ENCODE measurements at regions of chr15 and their contacts with region 1.

Region 1: DNA sequence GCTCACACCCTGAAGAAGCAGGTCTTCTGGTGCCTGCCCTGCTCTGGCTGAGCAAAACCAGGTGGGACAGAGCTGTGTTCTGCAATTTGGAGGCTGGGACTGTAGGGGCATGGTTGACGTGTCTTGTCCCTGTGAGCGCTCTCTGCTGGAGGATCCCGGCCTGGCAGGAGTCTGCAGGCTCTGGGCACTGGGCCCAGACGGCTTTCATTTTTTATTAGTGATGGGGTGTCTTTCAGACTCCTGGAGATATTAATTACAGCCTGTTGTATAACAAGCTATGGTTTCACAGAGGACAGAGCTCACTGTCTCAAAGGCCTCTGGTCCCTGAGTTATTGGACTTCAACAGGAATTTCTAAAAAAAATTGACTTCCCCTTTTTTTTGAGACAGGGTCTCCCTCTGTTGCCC is 29.5 kb upstream of the ZNF710 start:
- DNase-seq: peak; percentile 29
- H3K4me3 ChIP-seq: no peak overlapping the region
- H3K27ac ChIP-seq: no peak overlapping the region
- H3K4me1 ChIP-seq: no peaks in the 10 kb centered on the region
- H3K27me3 ChIP-seq: peaks cover 0 to 4% of the 10 kb centered on the region in 2 experiments
- CTCF ChIP-seq: peak; percentile 40 to 64
- POLR2A ChIP-seq: no peak

Region 2: GRCh38 chr15:89750560-89751542 is 220.7 kb before region 1 on chr15 and contains the start of gene MESP1:
- CTCF ChIA-PET with region 1: no interaction called
- POLR2A ChIA-PET with region 1: no interaction called
- dilution Hi-C with region 1: no loop called
- intact Hi-C with region 1: loop called (anchors 5 kb)
- DNase-seq: peak; percentile 91
- H3K4me3 ChIP-seq: peak within 1 kb of the TSS; percentile 38 to 48 (median 46)
- H3K27ac ChIP-seq: no peak within 1 kb of the TSS
- H3K4me1 ChIP-seq: peaks cover 6% of the 10 kb centered on the region
- H3K27me3 ChIP-seq: peaks cover 3 to 12% of the 10 kb centered on the region in 2 experiments
- CTCF ChIP-seq: peak; percentile 66 to 90
- POLR2A ChIP-seq: peak; percentile 42
- total RNA-seq, gene MESP1: 1.0 and 1.7 TPM in 2 replicates

Region 3: DNA sequence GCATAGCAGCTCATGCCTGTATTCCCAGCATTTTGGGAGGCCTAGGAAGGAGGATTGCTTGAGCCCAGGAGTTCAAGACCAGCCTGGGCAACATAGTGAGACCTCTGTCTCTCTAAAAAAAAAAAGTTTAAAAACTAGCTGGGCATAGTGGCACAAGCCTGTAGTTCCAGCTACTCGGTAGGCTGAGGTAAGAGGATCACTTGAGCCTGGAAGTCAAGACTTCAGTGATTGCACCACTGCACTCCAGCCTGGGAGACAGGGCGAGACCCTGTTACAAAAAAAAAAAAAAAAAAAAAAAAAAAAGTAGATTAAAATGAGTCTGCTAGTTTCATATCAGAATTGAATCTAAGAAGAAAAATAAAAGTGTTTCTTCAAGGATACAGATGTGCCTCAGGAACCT is 124.5 kb before region 1 on chr15:
- CTCF ChIA-PET with region 1: no interaction called
- POLR2A ChIA-PET with region 1: no interaction called
- dilution Hi-C with region 1: no loop called
- intact Hi-C with region 1: no loop called
- DNase-seq: no peak
- H3K4me3 ChIP-seq: no peak overlapping the region
- H3K27ac ChIP-seq: peak overlapping the region; percentile 87
- H3K4me1 ChIP-seq: peaks cover 52% of the 10 kb centered on the region
- H3K27me3 ChIP-seq: no peaks in the 10 kb centered on the region
- CTCF ChIP-seq: no peak
- POLR2A ChIP-seq: no peak

Region 4: GRCh38 chr15:89857673-89858072 is 113.9 kb before region 1 on chr15:
- CTCF ChIA-PET with region 1: no interaction called
- POLR2A ChIA-PET with region 1: no interaction called
- dilution Hi-C with region 1: no loop called
- intact Hi-C with region 1: no loop called
- DNase-seq: no peak
- H3K4me3 ChIP-seq: no peak overlapping the region
- H3K27ac ChIP-seq: no peak overlapping the region
- H3K4me1 ChIP-seq: no peaks in the 10 kb centered on the region
- H3K27me3 ChIP-seq: no peaks in the 10 kb centered on the region
- CTCF ChIP-seq: no peak
- POLR2A ChIP-seq: no peak

Region 5: DNA sequence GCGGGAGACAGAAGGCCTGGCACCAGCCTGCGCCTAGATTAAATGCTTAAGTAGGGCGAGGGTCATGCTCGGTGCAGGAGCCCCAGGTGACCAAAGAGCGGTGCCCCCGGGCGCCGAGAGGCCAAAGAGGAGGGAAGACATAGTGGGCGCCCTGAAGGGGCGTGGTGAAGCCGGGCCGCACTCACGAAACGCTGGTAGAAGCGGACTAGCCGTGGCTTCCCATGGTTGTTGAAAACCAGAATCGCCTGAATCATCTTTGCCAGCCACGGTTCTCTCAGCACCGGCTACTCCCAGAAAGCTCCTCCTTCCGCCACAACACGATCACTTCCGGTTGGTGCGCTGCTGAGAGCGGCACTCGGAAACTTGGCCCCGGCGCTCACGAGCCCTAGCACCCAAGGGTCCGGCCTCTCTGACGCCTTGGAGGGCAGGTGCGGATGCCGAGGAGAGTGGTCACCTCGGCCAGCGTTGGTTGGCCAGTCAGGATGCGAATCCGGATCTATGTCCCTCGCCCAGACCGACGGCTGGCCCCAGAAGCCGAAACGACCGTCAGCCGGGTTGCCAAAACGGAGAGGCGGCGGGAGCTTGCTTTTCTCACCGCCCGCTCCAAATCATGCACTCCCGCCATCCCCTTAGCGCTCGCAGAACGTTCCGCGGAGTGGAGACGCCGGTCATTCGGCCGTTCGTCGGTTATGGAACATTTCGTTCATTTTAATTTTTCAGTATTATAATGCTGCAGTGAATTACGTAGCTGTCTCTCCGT is 77.7 kb before region 1 on chr15 and contains the start of gene AP3S2:
- CTCF ChIA-PET with region 1: interaction called, 3 read pairs
- POLR2A ChIA-PET with region 1: no interaction called
- dilution Hi-C with region 1: no loop called
- intact Hi-C with region 1: loop called (anchors 1 kb)
- DNase-seq: peak; percentile 92
- H3K4me3 ChIP-seq: peak within 1 kb of the TSS; percentile 77 to 96 (median 86)
- H3K27ac ChIP-seq: peak within 1 kb of the TSS; percentile 69
- H3K4me1 ChIP-seq: peaks cover 5% of the 10 kb centered on the region
- H3K27me3 ChIP-seq: no peaks in the 10 kb centered on the region
- CTCF ChIP-seq: no peak
- POLR2A ChIP-seq: peak; percentile 85
- total RNA-seq, gene AP3S2: 20.4 and 31.1 TPM in 2 replicates

Region 6: DNA sequence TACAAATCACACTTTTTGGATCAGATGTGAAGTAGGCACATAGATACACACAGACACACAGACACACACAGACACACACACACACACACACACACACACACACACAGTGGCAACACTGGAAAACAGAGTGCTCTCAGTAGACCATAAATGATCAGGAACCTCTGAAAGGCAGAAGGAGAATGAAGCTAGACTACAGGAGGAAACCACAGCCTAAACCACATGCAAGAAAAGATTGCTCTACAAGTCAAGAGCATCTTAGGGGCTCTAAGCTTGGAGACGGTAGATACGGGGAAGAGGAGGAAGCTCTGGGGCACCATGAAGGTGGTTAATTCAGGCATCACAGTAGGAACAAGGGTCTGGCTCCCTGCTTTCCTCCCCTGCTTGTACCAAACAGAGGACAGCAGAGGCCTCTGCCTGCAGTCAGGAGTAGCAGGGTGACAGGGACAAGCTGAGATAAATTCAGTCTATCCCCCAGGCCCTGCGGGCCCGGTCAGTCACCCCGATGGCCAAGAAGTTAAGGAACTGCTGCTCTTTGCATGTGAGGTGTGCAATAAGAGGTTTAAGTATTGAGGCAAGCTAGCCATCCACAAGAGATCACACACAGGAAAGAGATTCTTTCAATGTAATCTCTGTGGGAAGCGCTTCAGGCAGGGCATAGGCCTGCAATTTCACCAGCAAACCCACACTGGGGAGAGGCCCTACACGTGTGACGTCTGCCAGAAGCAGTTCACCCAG is 35.4 kb before region 1 on chr15:
- CTCF ChIA-PET with region 1: no interaction called
- POLR2A ChIA-PET with region 1: no interaction called
- dilution Hi-C with region 1: no loop called
- intact Hi-C with region 1: no loop called
- DNase-seq: no peak
- H3K4me3 ChIP-seq: no peak overlapping the region
- H3K27ac ChIP-seq: no peak overlapping the region
- H3K4me1 ChIP-seq: no peaks in the 10 kb centered on the region
- H3K27me3 ChIP-seq: peaks cover 0 to 6% of the 10 kb centered on the region in 2 experiments
- CTCF ChIP-seq: no peak
- POLR2A ChIP-seq: no peak